Aorta (tissue), 5 donors: ENCODE measurements at regions of chr18 and their contacts with region 1.

Region 1: DNA sequence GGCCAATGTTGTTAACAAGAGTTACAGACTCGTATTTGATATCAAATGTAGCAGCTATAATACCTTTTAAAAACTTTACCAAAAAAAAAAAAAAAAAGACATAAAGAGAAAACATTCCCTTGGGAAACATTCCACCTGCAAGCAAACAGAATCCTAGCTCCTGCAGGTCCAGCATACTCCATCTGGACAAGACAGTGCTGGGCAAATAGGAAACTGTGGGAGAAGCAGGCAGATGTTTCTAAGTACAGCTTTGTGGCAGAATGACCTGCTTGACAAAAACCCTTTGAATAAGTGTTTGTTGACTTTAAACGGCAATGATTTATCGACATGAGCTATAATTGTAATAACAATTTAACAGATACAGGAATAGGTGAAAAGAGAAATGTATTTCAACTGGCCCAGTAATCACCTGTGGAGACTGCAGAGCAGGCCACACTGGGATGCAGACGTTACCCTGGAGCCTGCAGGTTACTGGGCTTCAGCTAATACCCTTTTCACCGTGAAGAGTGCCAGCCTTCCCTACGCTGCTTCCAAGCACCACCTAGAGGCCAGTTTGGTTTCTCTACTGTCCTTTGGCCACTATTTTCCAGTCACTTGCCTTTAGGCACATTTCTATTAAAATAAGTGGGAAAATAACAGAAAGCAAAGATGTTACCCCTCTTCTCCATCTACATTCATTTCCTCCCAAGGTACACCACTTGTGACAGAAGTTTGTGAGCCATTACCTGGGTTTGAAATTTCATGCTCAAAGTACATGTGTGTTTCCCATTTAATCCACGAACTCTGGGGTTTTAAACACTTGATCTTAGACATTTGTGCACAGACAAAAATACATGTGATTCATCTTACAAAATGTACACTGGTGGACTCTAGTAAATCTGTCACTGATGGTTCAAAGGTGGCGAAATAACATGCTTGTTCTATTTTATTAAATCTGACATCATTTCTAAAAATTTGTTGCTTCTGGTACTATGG is 96.9 kb upstream of the ZNF397 start:
- DNase-seq: peak in 1 of 2 donors; percentile 62
- ATAC-seq: peak; percentile 89
- H3K4me3 ChIP-seq: no peak overlapping the region
- H3K27ac ChIP-seq: no peak overlapping the region
- H3K4me1 ChIP-seq: peaks cover 2% of the 10 kb centered on the region in 2 donors
- H3K27me3 ChIP-seq: no peaks in the 10 kb centered on the region

Region 2: DNA sequence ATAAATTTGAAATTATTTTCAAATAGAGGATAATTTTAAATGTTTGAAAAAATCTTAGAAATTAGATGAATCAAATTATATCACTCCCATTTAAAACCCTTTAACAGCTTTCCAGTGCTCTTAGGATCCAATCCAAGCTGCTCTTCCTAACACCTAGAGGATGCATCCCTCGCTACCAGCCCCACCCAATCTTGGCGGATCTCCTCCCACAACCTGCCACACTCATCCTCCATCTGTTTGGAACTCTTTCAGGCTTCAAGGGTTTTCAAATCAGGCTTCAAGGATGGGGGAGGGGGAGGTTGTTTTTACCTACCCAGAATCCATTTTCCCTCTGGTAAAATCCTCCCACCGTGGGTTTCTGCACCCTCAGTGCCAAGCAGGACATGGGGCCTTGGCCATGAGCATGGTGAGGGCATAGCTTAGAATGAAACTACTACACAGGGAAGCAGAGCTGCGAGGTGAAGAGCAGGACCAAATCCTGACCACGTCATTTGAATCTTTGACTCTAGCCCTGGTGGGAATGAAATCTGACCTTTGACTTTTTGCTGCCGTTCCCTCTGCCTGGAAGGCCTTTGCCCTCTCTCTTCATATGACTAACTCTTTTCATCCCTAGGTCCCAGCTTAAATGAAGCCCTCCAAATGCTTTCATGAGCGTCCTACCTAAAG is 215.7 kb before region 1 on chr18:
- intact Hi-C with region 1: no loop called
- DNase-seq: no peak
- ATAC-seq: no peak
- H3K4me3 ChIP-seq: no peak overlapping the region
- H3K27ac ChIP-seq: no peak overlapping the region
- H3K4me1 ChIP-seq: no peaks in the 10 kb centered on the region
- H3K27me3 ChIP-seq: no peaks in the 10 kb centered on the region

Region 3: DNA sequence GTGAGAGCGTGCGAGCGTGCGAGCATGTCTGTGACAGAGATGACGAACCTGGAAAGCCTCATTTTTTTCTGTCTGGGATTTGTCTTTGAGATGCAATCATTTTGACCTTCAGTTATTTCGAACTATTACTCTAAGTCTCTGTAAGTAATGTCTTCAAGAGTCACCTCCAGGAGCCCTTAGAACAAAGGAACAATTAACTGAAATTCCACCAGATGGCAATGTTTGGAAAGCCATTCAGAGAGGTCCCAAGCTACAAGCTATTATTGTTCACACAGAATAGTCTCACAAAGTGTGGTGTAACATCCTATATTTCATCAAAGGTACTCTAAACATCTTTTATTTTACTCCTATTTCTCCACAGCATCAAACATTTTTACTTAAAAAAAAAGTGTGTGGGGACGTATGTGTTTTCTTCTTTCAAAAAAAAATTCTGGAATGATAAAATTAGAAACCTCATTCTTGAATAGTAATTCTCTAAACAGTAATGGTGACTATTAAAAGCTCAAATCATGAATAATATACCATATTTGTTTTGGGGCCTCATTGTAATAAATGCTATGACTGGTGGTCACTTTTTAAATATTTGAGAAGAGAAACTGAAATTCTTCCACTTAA is 137.8 kb before region 1 on chr18:
- intact Hi-C with region 1: loop called (anchors 1 to 2 kb)
- DNase-seq: no peak
- ATAC-seq: peak; percentile 83
- H3K4me3 ChIP-seq: no peak overlapping the region
- H3K27ac ChIP-seq: no peak overlapping the region
- H3K4me1 ChIP-seq: no peaks in the 10 kb centered on the region
- H3K27me3 ChIP-seq: no peaks in the 10 kb centered on the region